OCI-LY7 (cell line): ENCODE measurements at regions of chr5 and their contacts with region 1.

Region 1: DNA sequence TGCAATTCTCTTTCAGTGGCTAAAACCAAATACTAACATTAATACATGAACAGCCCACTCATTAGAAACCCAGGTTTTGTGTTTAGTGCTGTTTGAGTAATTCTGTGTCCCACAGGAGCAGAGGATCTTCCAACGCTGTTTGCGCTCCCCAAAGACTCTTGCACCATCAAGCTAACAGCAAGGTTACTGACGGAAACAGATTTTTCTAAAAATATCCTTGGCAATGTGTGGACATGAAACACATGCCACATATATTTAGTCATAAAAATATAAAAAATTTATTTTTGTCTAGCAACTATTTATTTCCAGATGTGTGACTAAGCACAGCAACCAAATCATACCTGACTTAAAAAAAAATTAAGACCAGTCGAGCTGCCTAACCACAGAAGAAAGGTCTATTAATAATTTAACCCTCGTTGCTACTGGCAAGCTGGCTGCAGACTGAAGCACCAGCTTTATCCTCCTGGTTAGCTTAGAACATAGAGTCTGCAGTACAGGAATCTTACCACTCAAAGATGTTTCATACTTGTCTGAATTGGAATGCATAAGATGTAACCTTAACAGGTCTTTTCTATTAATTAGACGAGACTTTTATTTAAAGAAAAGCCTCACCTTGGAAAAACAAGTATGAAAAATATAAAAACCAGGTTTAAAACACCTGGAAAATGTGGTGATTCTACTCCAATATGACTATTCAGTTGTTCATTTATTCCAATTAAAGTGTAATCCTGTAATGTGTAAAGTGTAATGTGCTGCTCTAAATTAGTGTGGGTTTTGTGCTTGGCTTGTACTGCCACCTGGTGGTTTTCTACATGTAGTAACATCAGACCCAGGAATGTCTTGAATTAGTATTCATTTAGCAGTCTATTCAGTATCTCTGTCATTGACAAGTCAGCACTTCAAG is 272.5 kb downstream of the EPB41L4A start:
- DNase-seq: peak; percentile 78
- H3K4me3 ChIP-seq: no peak overlapping the region
- H3K27ac ChIP-seq: no peak overlapping the region
- H3K4me1 ChIP-seq: no peaks in the 10 kb centered on the region
- CTCF ChIP-seq: peak; percentile 93

Region 2: GRCh38 chr5:111158105-111158744 is 988.4 kb before region 1 on chr5:
- CTCF ChIA-PET with region 1: no interaction called
- POLR2A ChIA-PET with region 1: no interaction called
- intact Hi-C with region 1: loop called (anchors 2 kb)
- DNase-seq: peak; percentile 71
- H3K4me3 ChIP-seq: no peak overlapping the region
- H3K27ac ChIP-seq: no peak overlapping the region
- H3K4me1 ChIP-seq: no peaks in the 10 kb centered on the region
- CTCF ChIP-seq: peak; percentile 100

Region 3: DNA sequence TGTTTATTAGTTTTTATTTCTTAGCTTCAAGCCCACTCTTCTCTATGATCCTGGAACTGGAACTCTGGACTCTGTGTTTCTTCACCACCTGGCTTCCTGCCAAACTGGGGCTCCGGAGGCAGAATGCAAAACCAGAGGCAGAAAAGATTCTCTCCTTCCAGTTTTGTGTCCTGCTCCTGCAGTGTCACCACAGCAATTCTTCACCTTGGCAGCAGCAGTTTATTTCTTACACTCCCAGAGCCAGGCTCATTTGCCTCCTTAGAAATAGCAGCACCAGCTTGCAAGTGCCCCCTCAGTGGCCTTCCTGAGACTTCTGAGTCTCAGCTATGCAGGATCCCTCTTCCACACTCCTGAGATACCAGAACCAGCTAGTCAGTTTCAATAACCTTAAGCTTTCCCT is 949.1 kb before region 1 on chr5:
- CTCF ChIA-PET with region 1: no interaction called
- POLR2A ChIA-PET with region 1: no interaction called
- intact Hi-C with region 1: no loop called
- DNase-seq: no peak
- H3K4me3 ChIP-seq: no peak overlapping the region
- H3K27ac ChIP-seq: no peak overlapping the region
- H3K4me1 ChIP-seq: no peaks in the 10 kb centered on the region
- CTCF ChIP-seq: no peak

Region 4: DNA sequence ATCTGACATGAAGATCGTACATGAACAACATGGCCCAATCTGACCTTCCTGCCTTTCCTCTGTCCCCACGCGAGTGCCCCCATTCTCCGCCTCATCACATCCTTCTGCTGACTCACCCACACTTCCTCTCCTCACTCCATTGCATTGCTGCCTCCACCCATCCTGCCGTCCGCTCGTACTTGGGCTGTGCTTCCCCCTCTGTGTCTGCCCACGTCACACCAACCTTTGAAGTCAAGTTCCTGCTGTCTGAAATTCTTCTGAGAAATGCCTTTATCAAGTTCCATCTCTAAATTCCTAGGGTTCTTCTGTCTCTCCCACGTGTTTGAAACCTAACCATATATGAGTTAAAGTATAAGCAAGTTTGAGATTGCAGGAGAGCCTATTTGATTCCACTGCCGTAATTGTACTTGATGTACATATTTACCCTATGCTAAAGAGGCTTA is 616.3 kb before region 1 on chr5:
- CTCF ChIA-PET with region 1: no interaction called
- POLR2A ChIA-PET with region 1: no interaction called
- intact Hi-C with region 1: loop called (anchors 5 kb)
- DNase-seq: peak; percentile 75
- H3K4me3 ChIP-seq: peak overlapping the region; percentile 29
- H3K27ac ChIP-seq: peak overlapping the region; percentile 33
- H3K4me1 ChIP-seq: peaks cover 16% of the 10 kb centered on the region
- CTCF ChIP-seq: no peak

Region 5: DNA sequence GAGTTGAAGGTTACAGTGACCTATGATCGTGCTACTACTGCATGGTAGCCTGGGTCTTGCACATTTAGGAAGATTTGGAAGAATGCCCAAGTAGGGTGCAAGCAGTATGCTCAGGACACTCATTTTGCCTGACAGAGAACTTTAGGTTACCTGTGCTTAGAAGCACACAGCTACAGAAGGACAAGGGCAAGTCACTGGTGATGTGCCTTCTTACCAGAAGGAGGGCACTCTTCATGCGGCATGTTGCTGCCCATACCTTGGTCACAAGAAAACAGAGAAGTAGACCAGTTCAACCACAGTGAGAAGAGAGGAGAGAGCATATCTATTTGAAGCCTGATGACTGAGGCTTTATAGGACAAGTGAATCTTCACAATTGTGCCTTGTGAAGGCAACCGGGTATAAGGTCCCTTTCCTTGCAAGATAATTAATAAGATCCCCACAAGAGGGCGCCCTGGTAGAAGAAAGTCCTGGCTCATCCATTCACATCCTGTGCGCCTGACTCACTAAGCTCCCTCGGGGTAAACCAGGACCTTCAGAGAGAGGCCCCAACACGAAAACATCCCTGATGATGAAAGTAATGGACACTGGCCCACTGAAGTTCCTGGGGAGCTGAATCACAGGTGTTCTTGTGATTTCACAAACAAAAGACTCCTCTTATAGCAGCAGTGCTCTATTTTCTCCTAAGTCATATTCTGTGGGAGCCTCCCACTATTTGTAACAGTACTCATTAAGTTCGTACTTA is 596.1 kb before region 1 on chr5:
- CTCF ChIA-PET with region 1: no interaction called
- POLR2A ChIA-PET with region 1: interaction called, 3 read pairs
- intact Hi-C with region 1: loop called (anchors 1 kb)
- DNase-seq: peak; percentile 85
- H3K4me3 ChIP-seq: no peak overlapping the region
- H3K27ac ChIP-seq: no peak overlapping the region
- H3K4me1 ChIP-seq: peaks cover 6% of the 10 kb centered on the region
- CTCF ChIP-seq: peak; percentile 87

Region 6: DNA sequence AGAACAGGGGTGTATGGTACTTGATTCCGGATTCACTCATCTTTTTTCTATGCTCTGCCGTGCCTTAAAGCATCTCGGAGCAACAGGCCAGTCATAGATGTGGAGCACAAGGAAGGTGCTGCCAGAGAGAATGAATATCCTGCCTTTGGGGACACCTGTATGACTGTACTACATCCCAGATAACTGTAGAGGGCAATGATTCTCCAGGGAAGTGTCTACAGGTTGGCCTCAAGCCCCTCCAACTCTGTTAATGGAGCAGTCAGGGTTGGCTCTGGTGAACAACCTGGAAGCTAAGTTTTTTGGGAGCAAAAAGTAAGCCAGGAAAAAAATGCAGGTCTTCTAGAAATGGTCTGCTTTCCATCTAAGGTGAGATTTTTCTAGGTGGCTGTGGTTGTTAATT is 460.6 kb before region 1 on chr5:
- CTCF ChIA-PET with region 1: interaction called, 4 read pairs
- POLR2A ChIA-PET with region 1: no interaction called
- intact Hi-C with region 1: loop called (anchors 1 kb)
- DNase-seq: peak; percentile 65
- H3K4me3 ChIP-seq: no peak overlapping the region
- H3K27ac ChIP-seq: no peak overlapping the region
- H3K4me1 ChIP-seq: peaks cover 10% of the 10 kb centered on the region
- CTCF ChIP-seq: peak; percentile 73

Region 7: DNA sequence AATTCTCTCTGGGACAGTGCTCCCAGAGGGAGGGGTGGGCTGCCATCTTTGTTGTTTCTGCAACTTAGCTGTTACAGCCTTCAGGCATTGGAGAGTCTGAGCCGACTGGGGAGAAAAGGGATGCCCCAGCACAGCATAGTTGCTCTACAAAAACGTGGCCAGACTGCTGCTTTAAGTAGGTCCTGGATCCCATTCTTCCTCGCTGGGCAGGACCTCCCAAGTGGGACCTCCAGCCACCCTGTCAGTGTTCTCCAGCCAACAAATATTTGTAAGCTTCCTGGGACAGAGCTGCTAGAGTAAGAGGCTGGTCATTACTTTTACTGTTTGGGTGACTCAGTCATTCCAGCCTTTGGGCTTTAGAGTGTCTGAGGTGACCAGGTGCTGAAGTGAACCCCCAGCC is 96.8 kb before region 1 on chr5:
- CTCF ChIA-PET with region 1: no interaction called
- POLR2A ChIA-PET with region 1: no interaction called
- intact Hi-C with region 1: no loop called
- DNase-seq: no peak
- H3K4me3 ChIP-seq: no peak overlapping the region
- H3K27ac ChIP-seq: no peak overlapping the region
- H3K4me1 ChIP-seq: no peaks in the 10 kb centered on the region
- CTCF ChIP-seq: no peak

Region 8: GRCh38 chr5:112329419-112330090 is 183.0 kb after region 1 on chr5:
- CTCF ChIA-PET with region 1: no interaction called
- POLR2A ChIA-PET with region 1: no interaction called
- intact Hi-C with region 1: no loop called
- DNase-seq: peak; percentile 64
- H3K4me3 ChIP-seq: peak overlapping the region; percentile 47
- H3K27ac ChIP-seq: peak overlapping the region; percentile 42
- H3K4me1 ChIP-seq: peaks cover 28% of the 10 kb centered on the region
- CTCF ChIP-seq: no peak